Spleen (tissue), 13 donors: ENCODE measurements at regions of chr5 and their contacts with region 1.

Region 1: GRCh38 chr5:159262859-159263567 is at the start of gene UBLCP1:
- DNase-seq: peak; percentile 94
- H3K4me3 ChIP-seq: peak within 1 kb of the TSS; percentile 72 to 89 (median 83)
- H3K27ac ChIP-seq: peak within 1 kb of the TSS; percentile 83 to 97 (median 96)
- H3K4me1 ChIP-seq: peaks cover 12 to 32% (median 22%) of the 10 kb centered on the region in 6 donors
- H3K27me3 ChIP-seq: no peaks in the 10 kb centered on the region
- CTCF ChIP-seq: no peak
- POLR2A ChIP-seq: peak in 1 of 3 donors; percentile 7
- total RNA-seq, gene UBLCP1: 25.4 to 33.0 (median 28.6) TPM

Region 2: DNA sequence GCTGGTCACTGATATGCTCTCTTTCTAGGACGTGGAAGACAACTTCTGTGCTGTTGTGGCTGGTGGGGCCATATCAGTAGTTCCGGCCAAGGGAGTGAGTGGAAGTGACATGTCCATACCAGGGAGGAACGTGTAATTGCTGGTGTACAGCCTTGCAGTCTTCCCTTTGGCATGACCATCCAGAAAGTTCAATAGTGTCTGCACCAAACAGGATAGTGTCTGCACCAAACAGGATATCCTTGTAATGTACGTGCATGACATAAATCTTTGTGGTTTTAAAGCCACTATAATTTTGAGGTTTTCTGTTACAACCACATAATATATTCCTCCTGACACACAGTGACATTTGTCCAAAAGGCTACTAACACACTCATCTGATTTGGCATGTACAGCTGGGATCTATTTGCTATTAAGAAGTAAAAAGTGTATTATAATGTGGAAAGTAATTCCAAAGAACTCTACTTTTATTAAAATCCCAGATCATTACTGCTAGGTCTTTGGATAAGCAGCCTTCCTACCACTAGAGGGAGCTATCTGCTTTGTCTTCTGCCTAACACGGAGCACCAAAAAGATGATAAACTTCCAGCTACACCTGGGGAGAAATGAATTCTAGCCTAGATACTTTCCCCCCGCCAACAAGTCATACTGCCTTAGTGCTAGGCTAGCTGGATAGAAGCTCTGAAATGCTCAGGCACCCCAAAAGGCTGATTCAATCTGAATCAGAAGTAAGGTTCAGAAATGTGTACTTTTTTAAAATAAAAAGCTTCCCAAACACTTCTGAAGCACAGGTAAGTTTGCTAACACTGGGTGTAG is 106.4 kb before region 1 on chr5:
- intact Hi-C with region 1: loop called (anchors 10 kb)
- DNase-seq: no peak
- H3K4me3 ChIP-seq: no peak overlapping the region
- H3K27ac ChIP-seq: peak overlapping the region in 5 of 8 donors; percentile 15 to 66 (median 50)
- H3K4me1 ChIP-seq: peaks cover 13 to 49% (median 19%) of the 10 kb centered on the region in 6 donors
- H3K27me3 ChIP-seq: no peaks in the 10 kb centered on the region
- CTCF ChIP-seq: peak; percentile 65 to 91 (median 83)
- POLR2A ChIP-seq: no peak

Region 3: GRCh38 chr5:159209438-159210305 is 53.3 kb before region 1 on chr5 and contains the start of gene RNF145:
- intact Hi-C with region 1: loop called (anchors 5 kb)
- DNase-seq: peak; percentile 98
- H3K4me3 ChIP-seq: peak within 1 kb of the TSS; percentile 78 to 97 (median 88)
- H3K27ac ChIP-seq: peak within 1 kb of the TSS; percentile 94 to 99 (median 97)
- H3K4me1 ChIP-seq: peaks cover 20 to 71% (median 50%) of the 10 kb centered on the region in 6 donors
- H3K27me3 ChIP-seq: no peaks in the 10 kb centered on the region
- CTCF ChIP-seq: peak in 1 of 11 experiments; percentile 14
- POLR2A ChIP-seq: peak in 1 of 3 donors; percentile 25
- total RNA-seq, gene RNF145: 57.7 to 90.7 (median 72.6) TPM